ENCODE measurements at regions of chr1 and their contacts with region 1.

Region 1: GRCh38 chr1:202315576-202316168 is 26.1 kb downstream of the UBE2T start:
- DNase-seq: peak; percentile 51 to 84 (median 77)
- ATAC-seq: peak; percentile 93
- H3K4me3 ChIP-seq: no peak overlapping the region
- H3K4me3 Mint-ChIP-seq: no peak overlapping the region
- H3K27ac ChIP-seq: no peak overlapping the region
- H3K27ac Mint-ChIP-seq: no peak overlapping the region
- H3K4me1 ChIP-seq: no peaks in the 10 kb centered on the region
- H3K4me1 Mint-ChIP-seq: no peaks in the 10 kb centered on the region
- H3K27me3 ChIP-seq: no peaks in the 10 kb centered on the region
- H3K27me3 Mint-ChIP-seq: peaks cover 3% of the 10 kb centered on the region
- CTCF ChIP-seq: peak; percentile 92

Region 2: DNA sequence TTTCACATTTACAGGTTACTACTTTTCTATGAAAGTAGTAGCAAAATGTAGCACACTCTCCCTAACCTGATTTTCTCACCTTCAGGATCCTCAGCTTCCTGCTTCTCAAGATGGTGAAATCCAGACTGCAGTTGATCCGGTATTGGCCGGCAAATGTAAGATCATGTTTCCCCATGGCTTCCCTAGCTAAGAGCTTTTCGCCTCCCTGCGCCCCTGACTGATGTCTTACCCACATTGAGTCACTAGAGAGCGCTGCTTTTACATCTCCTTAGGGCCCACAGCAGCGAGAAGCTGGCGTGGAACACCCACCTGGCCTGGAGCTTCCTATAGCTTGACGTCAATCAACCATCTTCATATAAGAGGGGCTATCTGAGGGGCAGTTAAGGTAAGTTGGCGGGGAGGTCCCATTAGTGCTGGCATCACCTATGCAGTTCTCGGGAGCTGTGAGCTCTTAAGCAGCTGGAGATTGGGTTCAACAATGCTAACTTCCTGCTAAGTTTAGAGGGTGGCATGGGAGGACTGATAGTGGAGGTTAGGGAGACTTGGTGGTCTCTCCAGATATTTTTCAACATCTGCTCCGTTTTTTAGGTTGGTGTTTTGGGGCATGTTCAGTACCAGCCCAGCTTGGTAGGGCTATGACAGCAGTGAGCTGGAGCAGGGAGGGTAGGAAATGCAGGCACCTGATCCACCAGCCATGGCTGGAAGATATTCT is 160.8 kb before region 1 on chr1:
- CTCF ChIA-PET with region 1: interaction called, 19 read pairs
- POLR2A ChIA-PET with region 1: no interaction called
- intact Hi-C with region 1: loop called (anchors 1 to 10 kb)
- DNase-seq: peak in 6 of 9 experiments; percentile 57 to 79 (median 62)
- ATAC-seq: peak; percentile 86
- H3K4me3 ChIP-seq: no peak overlapping the region
- H3K4me3 Mint-ChIP-seq: no peak overlapping the region
- H3K27ac ChIP-seq: peak overlapping the region in 1 of 2 experiments; percentile 14
- H3K27ac Mint-ChIP-seq: peak overlapping the region; percentile 57
- H3K4me1 ChIP-seq: peaks cover 42% of the 10 kb centered on the region
- H3K4me1 Mint-ChIP-seq: peaks cover 43% of the 10 kb centered on the region
- H3K27me3 ChIP-seq: no peaks in the 10 kb centered on the region
- H3K27me3 Mint-ChIP-seq: no peaks in the 10 kb centered on the region
- CTCF ChIP-seq: peak; percentile 58

Region 3: GRCh38 chr1:202192770-202193613 is 122.7 kb before region 1 on chr1:
- CTCF ChIA-PET with region 1: interaction called, 82 read pairs
- POLR2A ChIA-PET with region 1: no interaction called
- intact Hi-C with region 1: loop called (anchors 1 kb)
- DNase-seq: peak; percentile 30 to 75 (median 62)
- ATAC-seq: peak; percentile 44
- H3K4me3 ChIP-seq: peak overlapping the region in 1 of 2 experiments; percentile 20
- H3K4me3 Mint-ChIP-seq: no peak overlapping the region
- H3K27ac ChIP-seq: no peak overlapping the region
- H3K27ac Mint-ChIP-seq: no peak overlapping the region
- H3K4me1 ChIP-seq: peaks cover 7% of the 10 kb centered on the region
- H3K4me1 Mint-ChIP-seq: peaks cover 15% of the 10 kb centered on the region
- H3K27me3 ChIP-seq: peaks cover 0 to 8% of the 10 kb centered on the region in 2 experiments
- H3K27me3 Mint-ChIP-seq: peaks cover 14% of the 10 kb centered on the region
- CTCF ChIP-seq: peak; percentile 83

Region 4: GRCh38 chr1:202274611-202275010 is 41.1 kb before region 1 on chr1:
- CTCF ChIA-PET with region 1: interaction called, 49 read pairs
- POLR2A ChIA-PET with region 1: no interaction called
- intact Hi-C with region 1: loop called (anchors 1 kb)
- DNase-seq: peak in 8 of 9 experiments; percentile 30 to 69 (median 51)
- ATAC-seq: no peak
- H3K4me3 ChIP-seq: no peak overlapping the region
- H3K4me3 Mint-ChIP-seq: no peak overlapping the region
- H3K27ac ChIP-seq: no peak overlapping the region
- H3K27ac Mint-ChIP-seq: no peak overlapping the region
- H3K4me1 ChIP-seq: no peaks in the 10 kb centered on the region
- H3K4me1 Mint-ChIP-seq: no peaks in the 10 kb centered on the region
- H3K27me3 ChIP-seq: no peaks in the 10 kb centered on the region
- H3K27me3 Mint-ChIP-seq: peaks cover 5% of the 10 kb centered on the region
- CTCF ChIP-seq: no peak

Region 5: DNA sequence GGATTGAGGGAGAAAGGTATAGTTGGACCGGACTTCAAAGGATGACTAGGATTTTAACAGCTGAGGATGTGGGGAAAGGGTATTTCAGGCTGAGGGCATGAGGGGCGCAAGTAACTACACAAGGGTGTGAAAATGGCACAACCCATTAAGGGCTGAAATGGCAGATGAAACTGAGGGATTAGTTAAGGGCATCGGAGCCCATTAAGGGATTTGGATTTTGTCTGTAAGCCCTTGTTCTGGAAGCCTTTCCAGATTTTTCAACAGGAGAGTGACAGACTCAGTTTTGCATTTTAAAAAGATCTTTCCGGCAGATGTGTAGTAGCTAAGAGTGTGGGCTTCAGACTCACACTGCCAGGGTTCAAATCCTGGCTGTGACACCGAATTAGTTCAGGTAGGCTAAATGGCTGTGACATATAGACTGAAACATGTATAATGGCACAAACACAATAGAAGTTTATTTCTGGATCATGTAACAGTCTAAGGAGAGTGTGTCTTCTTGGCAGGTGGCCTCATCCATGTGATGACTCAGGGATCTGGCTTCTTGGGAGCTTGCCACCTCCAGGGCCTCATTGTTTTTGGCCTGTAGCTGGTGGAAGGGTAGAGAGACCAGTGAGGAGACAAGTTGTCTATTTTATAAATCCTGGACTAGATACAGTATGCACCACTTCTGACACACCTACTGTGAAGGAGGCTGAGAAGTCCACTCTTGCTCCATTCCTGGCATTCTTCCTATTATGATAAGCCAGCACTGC is 23.5 kb before region 1 on chr1:
- CTCF ChIA-PET with region 1: interaction called, 5 read pairs
- POLR2A ChIA-PET with region 1: no interaction called
- intact Hi-C with region 1: loop called in 1 of 2 experiments (anchors 2 kb)
- DNase-seq: no peak
- ATAC-seq: no peak
- H3K4me3 ChIP-seq: no peak overlapping the region
- H3K4me3 Mint-ChIP-seq: no peak overlapping the region
- H3K27ac ChIP-seq: no peak overlapping the region
- H3K27ac Mint-ChIP-seq: no peak overlapping the region
- H3K4me1 ChIP-seq: peaks cover 17% of the 10 kb centered on the region
- H3K4me1 Mint-ChIP-seq: peaks cover 20% of the 10 kb centered on the region
- H3K27me3 ChIP-seq: no peaks in the 10 kb centered on the region
- H3K27me3 Mint-ChIP-seq: no peaks in the 10 kb centered on the region
- CTCF ChIP-seq: no peak

Region 6: GRCh38 chr1:203202431-203203245 is 887.0 kb after region 1 on chr1:
- CTCF ChIA-PET with region 1: no interaction called
- POLR2A ChIA-PET with region 1: no interaction called
- intact Hi-C with region 1: no loop called
- DNase-seq: no peak
- ATAC-seq: no peak
- H3K4me3 ChIP-seq: no peak overlapping the region
- H3K4me3 Mint-ChIP-seq: no peak overlapping the region
- H3K27ac ChIP-seq: no peak overlapping the region
- H3K27ac Mint-ChIP-seq: no peak overlapping the region
- H3K4me1 ChIP-seq: no peaks in the 10 kb centered on the region
- H3K4me1 Mint-ChIP-seq: no peaks in the 10 kb centered on the region
- H3K27me3 ChIP-seq: peaks cover 0 to 3% of the 10 kb centered on the region in 2 experiments
- H3K27me3 Mint-ChIP-seq: peaks cover 11% of the 10 kb centered on the region
- CTCF ChIP-seq: no peak

Measured in CD8-positive, alpha-beta T cell (primary cell).